ENCODE measurements at regions of chr14 and their contacts with region 1.

Region 1: DNA sequence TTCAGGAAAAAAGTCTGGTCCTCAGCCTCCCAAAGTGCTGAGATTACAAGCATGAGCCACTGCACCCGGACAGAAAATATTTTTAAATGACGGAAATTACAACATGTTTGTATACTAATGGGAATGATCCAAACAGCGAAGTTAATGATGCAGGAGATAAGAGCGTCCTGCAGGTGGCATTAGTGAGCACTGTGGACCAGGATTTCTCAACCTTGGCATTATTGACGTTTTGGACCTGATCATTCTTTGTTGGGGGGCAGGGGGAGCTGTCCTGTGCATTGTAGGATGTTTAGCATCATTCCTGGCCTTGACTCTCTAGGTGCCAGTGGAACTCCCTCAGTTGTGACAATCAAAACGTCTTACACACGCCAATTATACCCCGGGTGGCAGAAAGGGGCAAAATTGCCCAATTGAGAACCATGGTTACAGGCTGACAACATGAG is 34.1 kb downstream of the SCFD1 start:
- DNase-seq: no peak
- ATAC-seq: peak in 1 of 2 donors; percentile 51
- H3K4me3 ChIP-seq: no peak overlapping the region
- H3K27ac ChIP-seq: no peak overlapping the region
- H3K4me1 ChIP-seq: no peaks in the 10 kb centered on the region
- H3K27me3 ChIP-seq: no peaks in the 10 kb centered on the region
- CTCF ChIP-seq: peak in 3 of 5 experiments; percentile 49 to 61 (median 54)
- POLR2A ChIP-seq: no peak

Region 2: DNA sequence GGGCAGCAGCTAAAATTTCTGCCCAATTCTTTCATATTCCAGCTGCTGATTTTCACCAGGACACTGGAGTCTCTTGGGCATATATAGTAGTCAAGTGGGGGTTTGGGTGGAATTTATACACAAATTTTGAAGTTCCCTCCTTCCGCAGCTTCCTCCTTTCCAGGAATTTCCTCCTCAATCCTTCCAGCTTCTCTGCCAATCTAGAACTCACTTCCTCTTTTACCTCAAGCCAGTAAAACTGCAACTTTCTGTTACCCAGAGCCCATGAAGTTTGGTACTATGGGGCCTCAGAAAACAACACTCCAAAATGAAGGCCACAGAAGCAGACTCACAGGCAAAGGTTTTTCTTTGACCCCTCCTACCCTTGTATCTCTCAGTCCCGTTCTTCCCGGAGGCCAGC is 149.0 kb before region 1 on chr14:
- in situ Hi-C with region 1: no loop called
- intact Hi-C with region 1: no loop called
- DNase-seq: no peak
- ATAC-seq: no peak
- H3K4me3 ChIP-seq: no peak overlapping the region
- H3K27ac ChIP-seq: no peak overlapping the region
- H3K4me1 ChIP-seq: no peaks in the 10 kb centered on the region
- H3K27me3 ChIP-seq: no peaks in the 10 kb centered on the region
- CTCF ChIP-seq: no peak
- POLR2A ChIP-seq: no peak

Region 3: DNA sequence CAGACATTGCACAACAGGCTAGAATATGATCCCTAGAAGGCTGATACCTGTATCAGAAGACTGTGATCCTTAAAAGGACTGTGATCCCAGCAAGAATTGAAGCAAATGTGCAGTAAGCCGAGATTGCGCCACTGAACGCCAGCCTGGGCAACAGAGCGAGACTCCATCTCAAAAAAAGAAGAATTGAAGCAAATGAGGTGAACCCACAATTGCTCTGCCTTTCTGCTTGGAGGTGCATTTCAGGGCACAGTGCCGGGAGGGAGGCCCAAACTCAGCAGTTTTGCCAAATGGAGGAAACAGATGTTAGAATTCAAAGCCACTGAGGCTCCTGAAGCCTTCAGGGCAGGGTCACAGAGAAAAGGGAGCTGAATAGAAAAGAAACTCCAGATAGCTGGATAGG is 157.0 kb after region 1 on chr14:
- in situ Hi-C with region 1: no loop called
- intact Hi-C with region 1: no loop called
- DNase-seq: no peak
- ATAC-seq: no peak
- H3K4me3 ChIP-seq: no peak overlapping the region
- H3K27ac ChIP-seq: no peak overlapping the region
- H3K4me1 ChIP-seq: no peaks in the 10 kb centered on the region
- H3K27me3 ChIP-seq: no peaks in the 10 kb centered on the region
- CTCF ChIP-seq: no peak
- POLR2A ChIP-seq: no peak

Region 4: DNA sequence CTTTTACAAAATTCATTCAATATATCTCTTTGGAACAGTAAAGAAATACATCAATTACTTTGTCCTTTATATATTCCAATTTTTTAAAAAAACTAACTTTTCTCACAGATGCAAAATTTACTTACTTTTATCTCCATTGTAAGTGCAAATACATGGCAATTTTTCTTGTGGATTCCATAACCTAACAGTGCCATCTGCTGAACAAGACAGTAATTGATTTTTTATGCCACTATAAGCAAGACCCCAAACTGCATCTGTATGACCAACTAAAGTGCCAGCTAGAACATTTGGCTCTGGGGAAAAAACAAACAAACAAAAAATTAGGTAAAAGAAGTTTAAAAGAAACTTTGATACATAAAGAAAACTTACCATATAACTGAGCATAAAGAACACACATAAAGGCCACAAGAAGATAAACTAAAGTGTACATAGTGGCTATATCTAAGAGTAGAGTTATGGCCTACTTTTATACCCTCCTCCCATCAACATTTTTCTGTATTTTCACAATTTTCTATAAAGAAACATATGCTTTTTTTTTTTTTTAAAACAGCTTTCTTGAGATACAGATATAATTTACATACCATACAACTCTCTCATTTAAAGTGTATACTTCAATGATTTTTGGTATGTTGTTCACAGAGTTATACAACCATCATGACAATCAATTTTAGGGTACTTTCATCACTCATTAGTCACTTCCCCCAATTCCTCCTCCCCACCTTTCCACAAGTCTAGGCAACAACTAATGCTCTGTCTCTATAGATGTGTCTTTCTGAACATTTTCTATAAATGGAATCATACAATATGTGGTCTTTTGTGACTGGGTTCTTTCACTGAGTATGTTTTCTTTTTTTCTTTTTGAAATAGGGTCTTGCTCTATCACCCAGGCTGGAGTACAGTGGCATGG is 250.8 kb after region 1 on chr14:
- in situ Hi-C with region 1: loop called in 1 of 4 experiments (anchors 10 kb)
- intact Hi-C with region 1: no loop called
- DNase-seq: no peak
- ATAC-seq: no peak
- H3K4me3 ChIP-seq: no peak overlapping the region
- H3K27ac ChIP-seq: no peak overlapping the region
- H3K4me1 ChIP-seq: no peaks in the 10 kb centered on the region
- H3K27me3 ChIP-seq: no peaks in the 10 kb centered on the region
- CTCF ChIP-seq: no peak
- POLR2A ChIP-seq: no peak

Region 5: DNA sequence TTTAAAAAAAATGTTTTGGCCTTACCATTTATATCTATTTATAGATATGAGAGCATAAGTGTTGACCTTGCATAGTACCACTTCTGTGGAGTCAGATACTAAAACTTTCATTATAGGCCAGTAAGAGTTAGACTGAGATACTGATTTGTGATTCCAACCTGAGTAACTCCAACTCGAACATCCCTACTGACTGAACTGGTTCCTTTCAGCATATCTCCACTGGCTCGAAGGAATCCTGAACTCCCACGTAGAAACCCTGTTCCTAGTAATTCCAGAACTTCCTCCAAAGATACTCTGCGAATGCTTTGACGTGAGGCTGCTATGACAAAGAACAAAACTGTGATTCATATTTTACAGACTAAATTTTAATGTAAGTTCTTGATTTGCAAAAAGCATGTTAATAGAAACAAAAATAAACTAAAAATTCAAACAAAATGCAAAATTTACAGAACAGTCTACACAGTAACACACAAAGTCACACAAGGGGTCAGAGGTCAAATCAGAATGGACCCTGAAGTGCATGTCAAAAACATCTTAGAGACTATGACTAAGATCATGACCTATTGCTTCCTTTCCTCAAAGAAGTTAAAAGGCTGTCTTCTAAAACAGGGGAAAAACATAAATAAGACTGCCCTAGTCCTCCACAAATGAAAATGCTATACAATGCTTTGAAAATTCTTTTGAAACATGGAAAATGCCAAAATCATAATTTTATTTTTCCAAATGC is 732.6 kb after region 1 on chr14:
- in situ Hi-C with region 1: loop called in 1 of 4 experiments (anchors 25 kb)
- intact Hi-C with region 1: no loop called
- DNase-seq: no peak
- ATAC-seq: peak; percentile 69 to 86
- H3K4me3 ChIP-seq: no peak overlapping the region
- H3K27ac ChIP-seq: peak overlapping the region in 3 of 4 donors; percentile 41 to 53 (median 42)
- H3K4me1 ChIP-seq: peaks cover 12 to 18% of the 10 kb centered on the region in 2 donors
- H3K27me3 ChIP-seq: no peaks in the 10 kb centered on the region
- CTCF ChIP-seq: no peak
- POLR2A ChIP-seq: no peak

Measured in gastrocnemius medialis (tissue), 4 donors.